ENCODE measurements at regions of chr18 and their contacts with region 1.

Region 1: GRCh38 chr18:35972197-35973052 is at the start of gene RMP24:
- DNase-seq: peak; percentile 97

Region 2: DNA sequence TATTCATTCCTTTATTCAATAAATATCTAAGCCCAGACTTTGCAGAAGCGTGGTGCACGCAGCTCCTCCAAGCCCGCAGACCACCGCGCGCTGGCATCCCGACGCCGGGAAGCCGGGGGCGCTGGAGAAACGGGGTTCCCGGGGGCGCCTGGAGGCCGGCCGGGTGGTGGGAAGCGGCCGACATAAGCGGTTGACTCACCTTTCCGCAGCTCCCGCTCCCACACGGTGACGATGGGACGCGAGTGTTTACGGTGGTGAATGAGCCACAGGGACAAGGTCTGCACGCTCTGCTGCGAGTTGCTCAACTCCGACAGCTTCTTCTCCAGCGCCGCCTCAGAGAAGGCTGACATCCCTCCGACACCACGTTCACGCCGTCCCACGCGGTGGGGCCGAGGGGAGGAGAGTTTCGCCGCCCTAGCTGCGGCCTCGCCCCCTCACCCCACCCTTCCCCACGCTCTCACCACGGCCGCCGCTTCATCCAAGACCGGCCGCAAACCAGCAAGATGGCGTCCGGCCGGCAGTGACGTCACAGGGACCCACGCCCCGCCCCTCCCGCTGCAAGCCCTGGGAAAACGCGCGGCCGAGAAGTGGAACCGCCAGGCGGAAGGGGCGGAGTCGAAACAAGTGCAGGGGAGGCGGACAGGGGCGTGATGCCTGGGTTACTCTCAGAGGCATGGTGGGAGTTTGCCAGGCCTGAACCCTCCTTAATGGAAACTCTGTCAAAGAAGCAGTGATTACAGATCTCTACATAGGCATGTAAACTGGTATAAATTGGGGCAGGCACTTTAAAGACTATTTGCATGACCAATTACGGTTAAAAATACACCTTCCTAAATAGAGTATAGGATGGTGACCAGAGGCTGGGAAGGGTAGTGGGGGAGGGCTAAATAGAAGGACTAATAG is 94.9 kb after region 1 on chr18 and contains the start of gene RPRD1A:
- intact Hi-C with region 1: loop called (anchors 1 kb)
- DNase-seq: peak; percentile 99
- total RNA-seq, gene RPRD1A: 50.7 TPM